Dendritic cell treated with granulocyte-macrophage colony-stimulating factor and Interleukin-4, amounts not matched to agents 40 ng/mL and 50 ng/mL, for 4 days (primary cell): ENCODE measurements at regions of chr1 and their contacts with region 1.

Region 1: GRCh38 chr1:2044510-2045319 is 5.5 kb upstream of the PRKCZ start:
- H3K4me3 Mint-ChIP-seq: peak overlapping the region; percentile 43
- H3K27ac Mint-ChIP-seq: no peak overlapping the region
- H3K4me1 Mint-ChIP-seq: peaks cover 8% of the 10 kb centered on the region
- H3K27me3 Mint-ChIP-seq: peaks cover 68% of the 10 kb centered on the region

Region 2: GRCh38 chr1:1943834-1944570 is 100.7 kb before region 1 on chr1:
- intact Hi-C with region 1: loop called (anchors 5 kb)
- H3K4me3 Mint-ChIP-seq: no peak overlapping the region
- H3K27ac Mint-ChIP-seq: no peak overlapping the region
- H3K4me1 Mint-ChIP-seq: peaks cover 9% of the 10 kb centered on the region
- H3K27me3 Mint-ChIP-seq: peaks cover 12% of the 10 kb centered on the region

Region 3: GRCh38 chr1:2212542-2213491 is 168.1 kb after region 1 on chr1:
- intact Hi-C with region 1: no loop called
- H3K4me3 Mint-ChIP-seq: peak overlapping the region; percentile 55
- H3K27ac Mint-ChIP-seq: peak overlapping the region; percentile 86
- H3K4me1 Mint-ChIP-seq: peaks cover 49% of the 10 kb centered on the region
- H3K27me3 Mint-ChIP-seq: peaks cover 26% of the 10 kb centered on the region

Region 4: DNA sequence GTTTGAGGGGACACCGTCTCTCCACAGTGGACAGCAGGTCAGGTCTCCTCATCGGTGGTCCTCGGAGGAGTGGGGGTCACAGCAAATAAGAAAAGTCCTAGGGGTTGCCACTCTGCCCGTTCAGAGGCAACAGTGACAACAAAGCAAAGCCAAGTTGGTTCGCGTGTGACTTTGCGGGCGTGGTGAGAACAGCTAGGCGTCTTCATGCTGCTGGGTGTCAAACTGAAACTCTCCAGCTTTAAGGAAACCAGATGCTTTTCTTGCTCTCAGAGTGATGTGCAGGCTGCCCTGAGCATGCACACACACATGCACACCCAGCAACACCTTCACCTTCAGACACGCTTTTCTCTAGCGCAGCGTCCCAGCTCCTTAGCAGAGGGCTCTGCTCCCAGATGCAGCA is 1339.7 kb after region 1 on chr1:
- intact Hi-C with region 1: no loop called
- H3K4me3 Mint-ChIP-seq: no peak overlapping the region
- H3K27ac Mint-ChIP-seq: no peak overlapping the region
- H3K4me1 Mint-ChIP-seq: no peaks in the 10 kb centered on the region
- H3K27me3 Mint-ChIP-seq: no peaks in the 10 kb centered on the region